Naive thymus-derived CD4-positive, alpha-beta T cell (primary cell): ENCODE measurements at regions of chr5 and their contacts with region 1.

Region 1: GRCh38 chr5:87243166-87243844 is 24.4 kb upstream of the RASA1 start:
- DNase-seq: no peak
- ATAC-seq: peak; percentile 67
- H3K4me3 ChIP-seq: no peak overlapping the region
- H3K4me3 Mint-ChIP-seq: no peak overlapping the region
- H3K27ac ChIP-seq: no peak overlapping the region
- H3K27ac Mint-ChIP-seq: peak overlapping the region in 1 of 9 donors; percentile 3
- H3K4me1 ChIP-seq: no peaks in the 10 kb centered on the region
- H3K4me1 Mint-ChIP-seq: peaks cover 0 to 4% (median 0%) of the 10 kb centered on the region in 7 donors
- H3K27me3 ChIP-seq: no peaks in the 10 kb centered on the region
- H3K27me3 Mint-ChIP-seq: peaks cover 0 to 13% (median 0%) of the 10 kb centered on the region in 5 donors

Region 2: GRCh38 chr5:87029951-87030350 is 213.4 kb before region 1 on chr5:
- CTCF ChIA-PET with region 1: no interaction called
- POLR2A ChIA-PET with region 1: no interaction called
- intact Hi-C with region 1: no loop called
- DNase-seq: no peak
- ATAC-seq: no peak
- H3K4me3 ChIP-seq: no peak overlapping the region
- H3K4me3 Mint-ChIP-seq: no peak overlapping the region
- H3K27ac ChIP-seq: no peak overlapping the region
- H3K27ac Mint-ChIP-seq: no peak overlapping the region
- H3K4me1 ChIP-seq: peaks cover 0 to 7% of the 10 kb centered on the region in 2 donors
- H3K4me1 Mint-ChIP-seq: peaks cover 12 to 35% (median 26%) of the 10 kb centered on the region in 7 donors
- H3K27me3 ChIP-seq: no peaks in the 10 kb centered on the region
- H3K27me3 Mint-ChIP-seq: peaks cover 0 to 32% (median 0%) of the 10 kb centered on the region in 5 donors

Region 3: GRCh38 chr5:87190687-87191086 is 52.6 kb before region 1 on chr5:
- CTCF ChIA-PET with region 1: no interaction called
- POLR2A ChIA-PET with region 1: no interaction called
- intact Hi-C with region 1: loop called in 1 of 2 experiments (anchors 5 kb)
- DNase-seq: no peak
- ATAC-seq: no peak
- H3K4me3 ChIP-seq: no peak overlapping the region
- H3K4me3 Mint-ChIP-seq: no peak overlapping the region
- H3K27ac ChIP-seq: no peak overlapping the region
- H3K27ac Mint-ChIP-seq: no peak overlapping the region
- H3K4me1 ChIP-seq: peaks cover 4 to 5% of the 10 kb centered on the region in 2 donors
- H3K4me1 Mint-ChIP-seq: peaks cover 8 to 30% (median 17%) of the 10 kb centered on the region in 7 donors
- H3K27me3 ChIP-seq: no peaks in the 10 kb centered on the region
- H3K27me3 Mint-ChIP-seq: no peaks in the 10 kb centered on the region